ENCODE measurements at regions of chr19 and their contacts with region 1.

Region 1: GRCh38 chr19:18160971-18161635 is 8.1 kb downstream of the PIK3R2 start:
- DNase-seq: peak in 1 of 2 donors; percentile 76
- H3K4me3 ChIP-seq: peak overlapping the region; percentile 50 to 67
- H3K27ac ChIP-seq: peak overlapping the region; percentile 85
- H3K4me1 ChIP-seq: peaks cover 13 to 29% of the 10 kb centered on the region in 2 donors
- H3K27me3 ChIP-seq: no peaks in the 10 kb centered on the region
- CTCF ChIP-seq: peak; percentile 37 to 88 (median 46)

Region 2: DNA sequence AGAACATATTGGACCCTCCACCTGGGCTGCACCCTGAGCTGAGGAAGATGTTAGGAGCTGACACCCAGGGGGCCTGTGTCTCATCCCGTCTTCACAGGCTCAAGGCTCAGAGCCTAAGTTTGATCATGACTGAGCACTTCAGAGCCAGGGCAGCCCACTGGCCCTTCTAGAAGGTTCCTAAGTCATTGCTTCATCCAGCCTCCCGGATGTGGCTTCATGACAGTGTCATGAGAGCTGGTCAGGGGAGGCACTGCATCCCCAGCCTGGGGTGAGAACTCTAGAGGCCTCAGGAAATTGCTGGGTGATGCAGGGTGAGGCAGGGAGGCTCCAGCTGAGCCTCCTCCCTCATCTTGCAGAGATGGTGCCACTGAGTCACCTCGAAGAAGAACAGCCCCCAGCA is 33.1 kb before region 1 on chr19:
- intact Hi-C with region 1: no loop called
- DNase-seq: no peak
- H3K4me3 ChIP-seq: no peak overlapping the region
- H3K27ac ChIP-seq: no peak overlapping the region
- H3K4me1 ChIP-seq: no peaks in the 10 kb centered on the region
- H3K27me3 ChIP-seq: no peaks in the 10 kb centered on the region
- CTCF ChIP-seq: no peak

Region 3: DNA sequence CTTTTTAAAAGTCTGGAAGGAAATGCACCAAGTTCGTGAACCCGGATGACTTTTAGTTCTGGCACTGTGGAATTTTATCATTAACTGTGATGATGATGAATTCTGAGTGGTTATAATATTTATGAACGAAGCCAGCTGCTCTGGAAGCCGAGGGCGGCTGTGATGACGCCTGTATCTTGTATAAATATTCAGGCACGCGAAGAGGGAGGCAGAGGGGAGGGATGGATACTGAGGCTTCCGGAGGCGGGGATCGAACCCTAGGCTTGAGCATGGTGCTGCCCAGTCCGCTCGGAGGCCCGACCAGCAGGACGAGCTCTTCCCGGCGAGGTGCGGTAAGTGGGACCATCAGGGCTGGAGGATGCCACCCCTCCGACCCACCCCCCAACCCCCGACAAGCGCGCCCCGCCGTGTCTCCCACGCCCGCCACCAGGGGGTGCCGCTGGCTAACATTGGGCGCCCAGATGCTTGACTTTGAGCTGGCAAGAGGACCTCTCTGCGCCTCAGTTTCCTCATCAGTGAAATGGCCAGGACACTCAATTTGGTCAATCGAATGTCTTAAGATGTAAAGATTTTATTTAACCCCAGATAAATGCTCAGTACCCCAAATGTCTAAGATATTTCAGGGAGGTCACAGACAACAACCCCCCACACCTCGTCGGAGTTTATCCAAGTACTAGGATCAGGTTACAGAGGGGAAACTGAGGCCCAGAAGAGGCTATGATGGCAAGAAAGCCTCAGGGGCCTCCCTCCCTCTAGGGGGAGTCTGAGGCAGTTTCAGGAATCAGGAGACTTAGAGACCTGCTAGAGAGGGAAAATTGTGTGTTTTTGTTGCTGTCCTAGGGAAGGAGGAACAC is 47.2 kb after region 1 on chr19:
- intact Hi-C with region 1: no loop called
- DNase-seq: no peak
- H3K4me3 ChIP-seq: no peak overlapping the region
- H3K27ac ChIP-seq: no peak overlapping the region
- H3K4me1 ChIP-seq: peaks cover 1 to 14% of the 10 kb centered on the region in 2 donors
- H3K27me3 ChIP-seq: no peaks in the 10 kb centered on the region
- CTCF ChIP-seq: peak; percentile 13 to 75 (median 68)

Region 4: DNA sequence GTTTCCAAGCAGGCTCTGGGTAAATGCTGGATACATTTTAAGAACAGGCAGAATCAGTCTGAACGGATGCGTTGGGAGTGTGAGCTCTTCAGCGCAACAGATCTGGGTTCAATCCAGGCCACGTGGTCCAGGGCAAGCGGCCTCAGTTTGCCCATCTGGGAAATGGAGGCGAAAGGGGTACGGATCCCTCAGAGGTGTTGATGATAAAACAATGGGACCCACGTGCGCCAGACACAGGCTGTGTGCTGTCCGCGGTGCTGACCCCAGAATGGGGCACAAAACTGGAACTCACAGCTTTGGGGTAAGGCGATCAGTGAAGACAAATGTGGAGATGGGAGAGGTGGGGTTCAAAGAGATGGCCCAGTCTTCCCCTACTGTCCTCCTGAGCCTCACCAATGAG is 78.2 kb after region 1 on chr19:
- intact Hi-C with region 1: no loop called
- DNase-seq: no peak
- H3K4me3 ChIP-seq: no peak overlapping the region
- H3K27ac ChIP-seq: no peak overlapping the region
- H3K4me1 ChIP-seq: no peaks in the 10 kb centered on the region
- H3K27me3 ChIP-seq: no peaks in the 10 kb centered on the region
- CTCF ChIP-seq: no peak

Region 5: GRCh38 chr19:18251587-18252369 is 90.7 kb after region 1 on chr19:
- intact Hi-C with region 1: loop called (anchors 5 kb)
- DNase-seq: peak in 1 of 2 donors; percentile 82
- H3K4me3 ChIP-seq: no peak overlapping the region
- H3K27ac ChIP-seq: no peak overlapping the region
- H3K4me1 ChIP-seq: no peaks in the 10 kb centered on the region
- H3K27me3 ChIP-seq: no peaks in the 10 kb centered on the region
- CTCF ChIP-seq: peak; percentile 96 to 98 (median 96)

Region 6: DNA sequence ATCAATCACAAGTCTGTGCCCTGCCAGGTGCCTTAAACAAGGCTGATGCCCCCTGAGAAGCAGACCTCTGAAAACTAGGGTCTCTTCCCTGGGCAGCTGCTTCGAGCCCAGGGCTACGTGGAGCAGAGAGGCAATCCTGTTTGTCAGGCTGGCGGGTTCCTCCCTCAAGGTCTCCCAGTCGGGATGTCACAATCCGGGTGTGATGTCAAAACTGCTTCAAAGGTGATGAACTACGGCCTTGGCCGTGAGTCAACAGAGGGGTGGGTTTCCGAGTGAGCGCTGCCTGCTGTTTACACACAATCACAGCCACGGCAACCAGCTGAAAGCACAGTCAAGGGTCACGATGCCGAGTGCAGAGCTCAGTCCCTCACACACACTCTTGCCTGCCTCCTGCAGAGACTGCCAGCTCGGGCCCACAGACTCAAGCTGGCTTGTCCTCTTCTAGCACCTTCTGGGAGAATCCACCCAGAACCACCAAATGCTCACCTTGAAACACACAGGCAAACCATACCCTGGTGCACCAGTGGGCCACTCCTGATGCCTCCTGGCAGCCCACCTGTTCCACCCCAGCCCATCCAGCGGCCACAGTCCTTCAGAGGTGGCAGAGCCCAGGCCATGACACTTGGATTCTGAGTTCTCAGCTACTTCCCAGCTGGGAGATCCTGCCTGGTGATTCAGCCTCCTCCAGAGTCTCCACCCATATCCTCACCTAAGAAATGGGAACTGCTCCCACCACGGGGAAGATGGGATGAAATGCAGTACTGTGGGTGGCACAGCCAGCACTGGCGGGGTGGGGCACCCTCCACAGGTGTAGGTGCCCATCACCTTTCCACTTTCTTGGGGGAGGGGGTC is 353.9 kb after region 1 on chr19:
- intact Hi-C with region 1: no loop called
- DNase-seq: peak in 1 of 2 donors; percentile 86
- H3K4me3 ChIP-seq: no peak overlapping the region
- H3K27ac ChIP-seq: peak overlapping the region; percentile 62 to 64
- H3K4me1 ChIP-seq: peaks cover 5 to 56% of the 10 kb centered on the region in 2 donors
- H3K27me3 ChIP-seq: no peaks in the 10 kb centered on the region
- CTCF ChIP-seq: no peak